Activated B cell treated with CpG ODN at 0.5 μM for 24 hours (primary cell): ENCODE measurements at regions of chr7 and their contacts with region 1.

Region 1: GRCh38 chr7:94004024-94004951 is at the start of gene BET1:
- DNase-seq: peak; percentile 89
- ATAC-seq: peak; percentile 96
- H3K4me3 Mint-ChIP-seq: peak within 1 kb of the TSS; percentile 100
- H3K27ac Mint-ChIP-seq: peak within 1 kb of the TSS; percentile 99
- H3K4me1 Mint-ChIP-seq: peaks cover 50% of the 10 kb centered on the region
- H3K27me3 Mint-ChIP-seq: peaks cover 4% of the 10 kb centered on the region
- CTCF ChIP-seq: no peak
- total RNA-seq, gene BET1: 23.0 and 23.7 TPM in 2 replicates

Region 2: DNA sequence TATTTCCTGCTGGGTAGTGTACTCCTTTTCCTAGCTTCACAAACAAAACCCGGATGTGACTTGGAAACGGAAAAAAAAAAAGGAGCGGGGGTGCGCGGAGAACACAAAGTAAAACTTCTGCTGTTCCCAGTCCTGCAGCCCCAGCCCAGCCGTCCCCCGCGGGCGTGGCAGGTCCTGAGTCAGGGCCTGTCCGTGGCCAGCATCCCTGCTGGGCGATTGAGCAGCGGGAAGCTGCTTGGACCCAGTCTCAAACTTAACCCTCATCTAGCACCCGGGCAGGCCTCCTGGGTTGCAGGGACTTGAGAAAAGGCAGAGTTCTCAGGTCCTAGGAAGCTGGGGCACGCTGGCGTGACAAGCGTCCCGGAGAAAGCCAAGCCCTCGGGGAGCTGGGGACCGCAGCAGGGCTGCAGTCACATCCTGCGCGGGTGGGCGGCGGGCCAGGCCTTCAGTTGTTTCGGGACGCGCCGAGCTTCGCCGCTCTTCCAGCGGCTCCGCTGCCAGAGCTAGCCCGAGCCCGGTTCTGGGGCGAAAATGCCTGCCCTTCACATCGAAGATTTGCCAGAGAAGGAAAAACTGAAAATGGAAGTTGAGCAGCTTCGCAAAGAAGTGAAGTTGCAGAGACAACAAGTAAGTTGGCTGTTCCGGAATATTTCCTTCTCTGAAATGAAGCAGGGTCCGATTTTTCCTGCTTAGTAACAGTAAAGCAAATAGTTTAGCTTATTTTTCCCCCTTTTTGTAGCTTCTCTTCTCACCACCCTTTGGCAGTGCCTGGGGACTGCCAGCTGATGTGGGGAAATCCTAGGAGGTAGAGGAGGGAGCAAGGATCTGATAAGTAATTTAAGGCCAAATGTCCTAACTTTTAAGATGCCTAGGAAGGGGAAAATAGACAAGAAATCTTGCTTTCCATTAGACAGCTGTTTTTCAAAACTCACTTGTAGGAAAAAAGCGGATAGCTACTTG is 82.4 kb before region 1 on chr7 and contains the start of gene GNG11:
- CTCF ChIA-PET with region 1: no interaction called
- POLR2A ChIA-PET with region 1: no interaction called
- intact Hi-C with region 1: loop called (anchors 5 kb)
- DNase-seq: peak; percentile 42
- ATAC-seq: peak; percentile 80
- H3K4me3 Mint-ChIP-seq: peak within 1 kb of the TSS; percentile 88
- H3K27ac Mint-ChIP-seq: peak within 1 kb of the TSS; percentile 46
- H3K4me1 Mint-ChIP-seq: peaks cover 25% of the 10 kb centered on the region
- H3K27me3 Mint-ChIP-seq: peaks cover 6% of the 10 kb centered on the region
- CTCF ChIP-seq: no peak
- total RNA-seq, gene GNG11: 2.4 and 2.6 TPM in 2 replicates

Region 3: GRCh38 chr7:94050046-94050445 is 45.8 kb after region 1 on chr7:
- CTCF ChIA-PET with region 1: no interaction called
- POLR2A ChIA-PET with region 1: interaction called, 3 read pairs
- intact Hi-C with region 1: loop called (anchors 1 kb)
- DNase-seq: peak; percentile 44
- ATAC-seq: peak; percentile 87
- H3K4me3 Mint-ChIP-seq: peak overlapping the region; percentile 71
- H3K27ac Mint-ChIP-seq: peak overlapping the region; percentile 97
- H3K4me1 Mint-ChIP-seq: peaks cover 77% of the 10 kb centered on the region
- H3K27me3 Mint-ChIP-seq: no peaks in the 10 kb centered on the region
- CTCF ChIP-seq: no peak

Region 4: GRCh38 chr7:94160719-94161435 is 156.6 kb after region 1 on chr7:
- CTCF ChIA-PET with region 1: no interaction called
- POLR2A ChIA-PET with region 1: no interaction called
- intact Hi-C with region 1: loop called (anchors 1 kb)
- DNase-seq: no peak
- ATAC-seq: peak; percentile 79
- H3K4me3 Mint-ChIP-seq: peak overlapping the region; percentile 78
- H3K27ac Mint-ChIP-seq: peak overlapping the region; percentile 89
- H3K4me1 Mint-ChIP-seq: peaks cover 41% of the 10 kb centered on the region
- H3K27me3 Mint-ChIP-seq: no peaks in the 10 kb centered on the region
- CTCF ChIP-seq: no peak